Panc1 (cell line): ENCODE measurements at regions of chr16 and their contacts with region 1.

Region 1: GRCh38 chr16:67372664-67373063 is 20.6 kb downstream of the TPPP3 start:
- DNase-seq: no peak
- ATAC-seq: no peak
- H3K4me3 ChIP-seq: no peak overlapping the region
- H3K27ac ChIP-seq: no peak overlapping the region
- H3K4me1 ChIP-seq: no peaks in the 10 kb centered on the region
- H3K27me3 ChIP-seq: no peaks in the 10 kb centered on the region
- CTCF ChIP-seq: no peak

Region 2: GRCh38 chr16:67349172-67349571 is 23.5 kb before region 1 on chr16:
- CTCF ChIA-PET with region 1: interaction called, 8 read pairs
- POLR2A ChIA-PET with region 1: interaction called, 12 read pairs
- in situ Hi-C with region 1: no loop called
- intact Hi-C with region 1: no loop called
- DNase-seq: no peak
- ATAC-seq: no peak; the same call in 1 of the 2 replicates
- H3K4me3 ChIP-seq: no peak overlapping the region
- H3K27ac ChIP-seq: no peak overlapping the region
- H3K4me1 ChIP-seq: no peaks in the 10 kb centered on the region; the same call in 1 of the 2 replicates
- H3K27me3 ChIP-seq: no peaks in the 10 kb centered on the region
- CTCF ChIP-seq: peak; percentile 50; the same call in 1 of the 2 replicates

Region 3: GRCh38 chr16:67361038-67361437 is 11.6 kb before region 1 on chr16:
- CTCF ChIA-PET with region 1: no interaction called
- POLR2A ChIA-PET with region 1: no interaction called
- in situ Hi-C with region 1: no loop called
- intact Hi-C with region 1: no loop called
- DNase-seq: no peak
- ATAC-seq: no peak
- H3K4me3 ChIP-seq: no peak overlapping the region
- H3K27ac ChIP-seq: no peak overlapping the region
- H3K4me1 ChIP-seq: no peaks in the 10 kb centered on the region
- H3K27me3 ChIP-seq: no peaks in the 10 kb centered on the region
- CTCF ChIP-seq: no peak